CD4-positive, alpha-beta T cell (primary cell): ENCODE measurements at regions of chr2 and their contacts with region 1.

Region 1: GRCh38 chr2:219177552-219178376 is at the start of gene RETREG2:
- DNase-seq: peak; percentile 67 to 96 (median 78)
- ATAC-seq: peak; percentile 66
- H3K4me3 ChIP-seq: peak within 1 kb of the TSS; percentile 90
- H3K4me3 Mint-ChIP-seq: peak within 1 kb of the TSS; percentile 94
- H3K27ac ChIP-seq: peak within 1 kb of the TSS; percentile 97 to 99
- H3K27ac Mint-ChIP-seq: peak within 1 kb of the TSS; percentile 99
- H3K4me1 ChIP-seq: peaks cover 89% of the 10 kb centered on the region
- H3K4me1 Mint-ChIP-seq: peaks cover 72% of the 10 kb centered on the region
- H3K27me3 ChIP-seq: no peaks in the 10 kb centered on the region
- H3K27me3 Mint-ChIP-seq: no peaks in the 10 kb centered on the region
- CTCF ChIP-seq: no peak
- total RNA-seq, gene RETREG2: 82.3 to 83.2 TPM

Region 2: DNA sequence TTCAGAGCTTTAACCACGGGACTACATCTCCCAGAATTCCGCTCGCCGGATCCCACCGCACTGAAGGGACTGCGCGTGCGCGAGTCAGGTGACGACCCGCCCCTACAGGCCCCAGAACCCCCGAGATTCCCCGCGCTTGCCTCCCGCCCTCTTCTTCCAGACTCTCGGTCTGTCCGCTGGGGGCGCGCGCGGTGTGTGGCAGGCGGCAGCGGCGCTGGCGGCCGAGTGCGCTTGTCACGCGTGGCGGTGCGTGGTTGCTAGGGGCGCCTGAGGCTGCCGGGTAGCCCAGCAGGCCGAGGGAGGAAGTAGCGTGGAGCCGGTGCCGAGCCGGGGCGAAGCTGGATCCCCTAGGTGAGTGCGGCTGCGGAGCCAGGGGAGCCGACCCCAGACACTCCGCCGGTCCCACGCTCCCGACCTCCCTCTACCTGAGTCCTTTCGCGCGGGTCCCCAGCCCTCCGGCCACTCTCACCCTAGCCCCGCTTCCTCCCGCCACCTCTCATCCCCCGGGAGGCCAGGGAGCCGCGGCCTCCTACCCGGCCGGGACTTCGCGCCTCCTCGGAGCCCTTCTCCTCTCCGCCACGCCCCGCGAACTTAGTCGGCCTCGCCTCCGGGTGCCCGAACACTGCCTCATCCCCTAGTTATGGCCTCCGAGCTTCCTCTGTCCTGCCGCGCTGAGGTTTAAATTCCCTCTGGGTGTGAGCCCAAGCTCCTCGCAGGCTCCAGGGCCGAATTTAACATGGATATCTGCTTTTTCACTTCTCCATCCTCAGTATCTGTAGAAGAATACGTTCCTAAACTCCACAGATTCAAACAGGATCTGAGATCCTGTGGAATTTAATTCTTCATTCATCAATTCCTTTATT is 466.8 kb before region 1 on chr2 and contains the start of gene TTLL4:
- CTCF ChIA-PET with region 1: no interaction called
- POLR2A ChIA-PET with region 1: no interaction called
- intact Hi-C with region 1: loop called in 1 of 2 experiments (anchors 10 kb)
- DNase-seq: peak; percentile 97 to 99 (median 99)
- ATAC-seq: peak; percentile 98
- H3K4me3 ChIP-seq: peak within 1 kb of the TSS; percentile 96
- H3K4me3 Mint-ChIP-seq: peak within 1 kb of the TSS; percentile 99
- H3K27ac ChIP-seq: peak within 1 kb of the TSS; percentile 66 to 87
- H3K27ac Mint-ChIP-seq: peak within 1 kb of the TSS; percentile 91
- H3K4me1 ChIP-seq: peaks cover 22% of the 10 kb centered on the region
- H3K4me1 Mint-ChIP-seq: peaks cover 26% of the 10 kb centered on the region
- H3K27me3 ChIP-seq: peaks cover 0 to 6% of the 10 kb centered on the region in 2 experiments
- H3K27me3 Mint-ChIP-seq: peaks cover 10% of the 10 kb centered on the region
- CTCF ChIP-seq: peak; percentile 87
- total RNA-seq, gene TTLL4: 7.3 to 10.8 TPM

Region 3: DNA sequence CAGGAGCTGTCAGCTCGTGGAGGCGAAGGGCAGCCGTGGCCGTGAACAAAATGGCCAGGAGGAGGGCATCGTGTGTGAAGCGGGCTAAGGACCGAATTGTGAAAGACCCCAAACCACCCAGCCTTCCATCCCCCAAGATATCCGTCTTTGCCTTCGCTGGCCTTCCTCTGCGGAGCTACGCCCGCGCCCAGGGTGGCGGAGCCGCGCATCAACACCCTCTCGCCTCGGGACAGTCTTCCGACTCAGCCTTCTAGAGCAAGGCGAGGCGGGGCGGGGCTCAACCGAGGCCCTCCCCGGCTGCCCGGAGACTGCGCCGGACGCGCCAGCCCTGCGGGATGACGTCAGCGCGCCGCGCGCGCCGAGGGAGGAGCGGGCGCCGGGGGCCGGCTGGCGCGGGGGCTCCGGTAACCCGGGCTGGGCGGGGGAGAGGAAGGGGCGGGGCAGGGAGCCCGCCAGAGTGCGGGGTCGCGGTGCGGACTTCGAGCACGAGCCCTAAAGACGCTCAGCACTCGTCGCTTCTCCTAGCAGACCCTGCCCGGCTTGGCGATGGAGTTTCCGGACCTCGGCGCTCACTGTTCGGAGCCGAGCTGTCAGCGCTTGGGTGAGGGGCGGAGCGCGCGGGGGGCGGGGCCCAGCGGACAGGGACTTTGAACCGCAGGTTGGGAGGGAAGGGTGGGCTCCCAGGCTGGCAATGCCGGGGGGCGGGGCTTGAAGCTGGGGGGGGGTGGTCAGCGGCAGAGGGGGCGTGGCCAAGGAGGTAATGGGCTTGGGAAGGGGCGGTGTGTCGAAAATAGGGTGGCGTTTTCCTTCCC is 28.9 kb after region 1 on chr2 and contains the start of gene ZFAND2B:
- CTCF ChIA-PET with region 1: interaction called, 12 read pairs
- POLR2A ChIA-PET with region 1: interaction called, 139 read pairs
- intact Hi-C with region 1: loop called (anchors 1 kb)
- DNase-seq: peak; percentile 88 to 98 (median 95)
- ATAC-seq: peak; percentile 93
- H3K4me3 ChIP-seq: peak within 1 kb of the TSS; percentile 69
- H3K4me3 Mint-ChIP-seq: peak within 1 kb of the TSS; percentile 90
- H3K27ac ChIP-seq: peak within 1 kb of the TSS; percentile 89 to 90
- H3K27ac Mint-ChIP-seq: peak within 1 kb of the TSS; percentile 93
- H3K4me1 ChIP-seq: peaks cover 53% of the 10 kb centered on the region
- H3K4me1 Mint-ChIP-seq: peaks cover 47% of the 10 kb centered on the region
- H3K27me3 ChIP-seq: no peaks in the 10 kb centered on the region
- H3K27me3 Mint-ChIP-seq: no peaks in the 10 kb centered on the region
- CTCF ChIP-seq: no peak
- total RNA-seq, gene ZFAND2B: 65.9 to 67.4 TPM

Region 4: GRCh38 chr2:219245148-219245898 is 67.6 kb after region 1 on chr2 and contains the starts of genes GLB1L and STK16:
- CTCF ChIA-PET with region 1: no interaction called
- POLR2A ChIA-PET with region 1: interaction called, 46 read pairs
- intact Hi-C with region 1: loop called in 1 of 2 experiments (anchors 5 kb)
- DNase-seq: peak; percentile 73 to 93 (median 84)
- ATAC-seq: peak; percentile 44
- H3K4me3 ChIP-seq: peak within 1 kb of the TSS; percentile 99
- H3K4me3 Mint-ChIP-seq: peak within 1 kb of the TSS; percentile 88
- H3K27ac ChIP-seq: peak within 1 kb of the TSS; percentile 95 to 98
- H3K27ac Mint-ChIP-seq: peak within 1 kb of the TSS; percentile 96
- H3K4me1 ChIP-seq: peaks cover 62% of the 10 kb centered on the region
- H3K4me1 Mint-ChIP-seq: peaks cover 74% of the 10 kb centered on the region
- H3K27me3 ChIP-seq: no peaks in the 10 kb centered on the region
- H3K27me3 Mint-ChIP-seq: no peaks in the 10 kb centered on the region
- CTCF ChIP-seq: no peak
- total RNA-seq, gene GLB1L: 2.4 to 3.0 TPM
- total RNA-seq, gene STK16: 11.2 to 14.1 TPM

Region 5: DNA sequence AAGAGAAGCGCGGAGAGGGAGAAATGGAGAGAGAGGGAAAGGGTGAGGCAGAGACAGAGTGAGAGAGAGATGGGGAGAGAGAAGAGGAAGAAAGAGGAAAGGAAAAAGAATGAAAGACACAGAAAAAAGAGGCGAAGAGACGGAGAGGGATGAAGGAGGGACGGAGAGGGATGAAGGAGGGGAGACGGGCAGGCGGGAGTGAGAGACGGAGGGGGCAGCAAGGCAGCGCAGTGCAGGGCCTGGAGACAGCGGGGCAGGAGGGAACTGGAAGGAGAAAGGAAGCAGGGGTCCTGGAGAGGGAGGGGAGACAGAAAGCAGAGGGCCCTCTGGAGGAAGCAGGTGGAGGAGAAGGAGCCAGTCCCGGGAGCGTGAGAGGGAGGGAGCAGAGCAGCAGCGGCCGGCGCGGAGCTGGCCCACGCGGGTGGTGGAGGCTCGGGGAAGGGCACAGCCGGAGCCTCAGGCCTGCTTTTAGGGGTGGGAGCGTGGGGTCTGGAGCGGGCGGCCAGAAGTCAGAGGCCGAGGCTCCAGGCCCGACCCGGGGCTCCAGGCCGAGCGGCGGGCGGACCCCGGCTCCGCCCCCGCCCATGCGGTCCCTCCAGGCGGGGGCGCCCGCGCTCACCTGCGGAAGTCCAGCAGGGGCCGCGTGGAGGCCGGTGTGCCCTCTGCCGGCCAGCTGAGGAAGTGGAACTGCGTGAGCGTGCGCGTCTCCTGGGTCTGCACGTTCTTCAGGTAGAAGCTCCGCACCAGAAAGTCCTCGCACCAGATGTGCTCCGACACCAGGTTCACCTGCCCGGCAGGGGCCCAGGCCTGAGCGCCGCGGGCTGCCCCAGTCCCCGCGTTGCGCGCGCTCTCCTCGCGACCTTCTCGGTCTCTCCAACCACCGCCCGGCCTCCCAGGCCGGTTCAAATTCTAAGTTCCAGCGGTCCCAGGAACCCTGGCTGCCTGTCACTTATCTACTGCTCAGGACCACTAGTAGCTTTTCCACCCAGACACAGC is 116.9 kb after region 1 on chr2:
- CTCF ChIA-PET with region 1: interaction called, 20 read pairs
- POLR2A ChIA-PET with region 1: interaction called, 26 read pairs
- intact Hi-C with region 1: loop called in 1 of 2 experiments (anchors 5 kb)
- DNase-seq: peak; percentile 78 to 96 (median 88)
- ATAC-seq: peak; percentile 94
- H3K4me3 ChIP-seq: peak overlapping the region; percentile 55
- H3K4me3 Mint-ChIP-seq: peak overlapping the region; percentile 67
- H3K27ac ChIP-seq: no peak overlapping the region
- H3K27ac Mint-ChIP-seq: peak overlapping the region; percentile 14
- H3K4me1 ChIP-seq: peaks cover 33% of the 10 kb centered on the region
- H3K4me1 Mint-ChIP-seq: peaks cover 32% of the 10 kb centered on the region
- H3K27me3 ChIP-seq: peaks cover 0 to 3% of the 10 kb centered on the region in 2 experiments
- H3K27me3 Mint-ChIP-seq: peaks cover 7% of the 10 kb centered on the region
- CTCF ChIP-seq: peak; percentile 99